Naive thymus-derived CD4-positive, alpha-beta T cell (primary cell): ENCODE measurements at regions of chr4 and their contacts with region 1.

Region 1: DNA sequence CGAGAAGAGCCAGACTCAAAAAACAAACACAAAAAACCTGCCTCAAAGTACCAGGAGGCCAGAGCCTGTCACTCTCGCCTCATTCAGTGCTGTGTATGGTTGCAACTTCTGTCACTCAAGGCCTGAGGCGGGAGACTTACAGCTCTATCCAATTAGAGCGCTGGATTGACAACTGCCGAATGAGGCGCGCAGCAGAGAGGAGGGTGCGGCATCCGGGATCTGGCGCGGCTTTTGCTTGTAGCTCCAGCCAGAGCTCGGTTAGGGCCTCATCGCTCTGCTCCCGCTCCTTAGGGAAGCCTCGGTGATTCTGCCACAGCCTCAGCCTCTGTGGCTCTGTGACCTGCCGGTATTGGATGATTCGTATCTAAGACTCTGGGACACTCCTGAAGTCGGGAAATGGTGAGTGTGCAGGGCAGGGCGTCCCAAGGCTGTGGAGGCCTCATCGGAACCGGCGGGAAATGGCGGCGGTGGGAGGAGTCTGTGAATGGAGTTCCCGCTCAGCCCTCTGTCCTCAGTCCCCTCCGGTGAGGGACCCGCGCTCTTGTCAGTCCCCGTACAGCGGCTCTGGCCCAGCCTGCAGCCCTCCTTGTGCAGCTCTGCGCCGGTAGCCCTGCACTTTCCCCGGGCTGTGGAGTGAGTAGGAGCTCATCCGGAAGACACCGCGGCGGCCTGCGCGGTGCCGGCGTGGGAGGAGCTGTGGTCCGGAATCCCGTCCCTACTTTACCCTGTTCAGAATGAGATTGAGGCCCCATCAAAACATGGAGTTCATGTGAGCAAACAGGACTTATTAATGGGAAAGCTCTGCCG is at the start of gene ZNF718:
- DNase-seq: peak; percentile 17 to 94 (median 90)
- ATAC-seq: peak; percentile 93
- H3K4me3 ChIP-seq: peak within 1 kb of the TSS; percentile 89
- H3K4me3 Mint-ChIP-seq: peak within 1 kb of the TSS; percentile 91 to 100 (median 98)
- H3K27ac ChIP-seq: peak within 1 kb of the TSS; percentile 94
- H3K27ac Mint-ChIP-seq: peak within 1 kb of the TSS; percentile 93 to 100 (median 99)
- H3K4me1 ChIP-seq: peaks cover 22 to 30% of the 10 kb centered on the region in 2 donors
- H3K4me1 Mint-ChIP-seq: peaks cover 21 to 52% (median 42%) of the 10 kb centered on the region in 7 donors
- H3K27me3 ChIP-seq: no peaks in the 10 kb centered on the region
- H3K27me3 Mint-ChIP-seq: no peaks in the 10 kb centered on the region
- total RNA-seq, gene ZNF718: 2.4 to 12.3 (median 10.0) TPM

Region 2: DNA sequence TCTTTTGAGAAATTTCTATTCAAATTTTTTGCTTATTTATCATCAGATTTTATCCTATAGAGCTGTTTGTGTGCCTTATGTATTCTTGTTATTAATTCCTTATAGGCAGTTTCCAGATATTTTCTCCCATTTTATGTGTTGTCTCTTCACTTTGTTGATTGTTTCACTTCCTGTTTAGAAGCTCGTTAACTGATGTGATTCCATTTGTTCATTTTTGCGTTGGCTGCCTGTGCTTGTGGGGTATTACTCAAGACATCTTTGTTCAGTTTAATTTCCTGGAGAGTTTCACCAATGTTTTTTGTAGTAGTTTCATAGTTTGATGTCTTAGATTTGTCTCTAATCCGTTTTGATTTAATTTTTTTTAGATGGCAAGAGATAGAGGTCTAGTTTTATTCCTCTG is 14.5 kb after region 1 on chr4:
- CTCF ChIA-PET with region 1: no interaction called
- POLR2A ChIA-PET with region 1: interaction called, 26 read pairs
- intact Hi-C with region 1: no loop called
- DNase-seq: no peak
- ATAC-seq: no peak
- H3K4me3 ChIP-seq: no peak overlapping the region
- H3K4me3 Mint-ChIP-seq: peak overlapping the region in 3 of 10 donors; percentile 19 to 44 (median 23)
- H3K27ac ChIP-seq: no peak overlapping the region
- H3K27ac Mint-ChIP-seq: no peak overlapping the region
- H3K4me1 ChIP-seq: peaks cover 0 to 4% of the 10 kb centered on the region in 2 donors
- H3K4me1 Mint-ChIP-seq: peaks cover 0 to 39% (median 8%) of the 10 kb centered on the region in 7 donors
- H3K27me3 ChIP-seq: no peaks in the 10 kb centered on the region
- H3K27me3 Mint-ChIP-seq: no peaks in the 10 kb centered on the region

Region 3: GRCh38 chr4:473570-474457 is 349.3 kb after region 1 on chr4:
- CTCF ChIA-PET with region 1: interaction called, 5 read pairs
- POLR2A ChIA-PET with region 1: interaction called, 15 read pairs
- intact Hi-C with region 1: loop called in 1 of 2 experiments (anchors 5 kb)
- DNase-seq: peak; percentile 78 to 98 (median 96)
- ATAC-seq: peak; percentile 99
- H3K4me3 ChIP-seq: peak overlapping the region; percentile 93
- H3K4me3 Mint-ChIP-seq: peak overlapping the region; percentile 93 to 99 (median 98)
- H3K27ac ChIP-seq: peak overlapping the region; percentile 92
- H3K27ac Mint-ChIP-seq: peak overlapping the region; percentile 98 to 100 (median 100)
- H3K4me1 ChIP-seq: peaks cover 5 to 7% of the 10 kb centered on the region in 2 donors
- H3K4me1 Mint-ChIP-seq: peaks cover 17 to 47% (median 37%) of the 10 kb centered on the region in 7 donors
- H3K27me3 ChIP-seq: no peaks in the 10 kb centered on the region
- H3K27me3 Mint-ChIP-seq: no peaks in the 10 kb centered on the region